ENCODE measurements at regions of chr14 and their contacts with region 1.

Region 1: GRCh38 chr14:21071225-21072030 is 1.3 kb downstream of the ARHGEF40 start:
- H3K4me3 ChIP-seq: peak overlapping the region; percentile 79
- H3K27ac ChIP-seq: peak overlapping the region; percentile 86
- H3K4me1 ChIP-seq: peaks cover 16% of the 10 kb centered on the region
- CTCF ChIP-seq: no peak

Region 2: DNA sequence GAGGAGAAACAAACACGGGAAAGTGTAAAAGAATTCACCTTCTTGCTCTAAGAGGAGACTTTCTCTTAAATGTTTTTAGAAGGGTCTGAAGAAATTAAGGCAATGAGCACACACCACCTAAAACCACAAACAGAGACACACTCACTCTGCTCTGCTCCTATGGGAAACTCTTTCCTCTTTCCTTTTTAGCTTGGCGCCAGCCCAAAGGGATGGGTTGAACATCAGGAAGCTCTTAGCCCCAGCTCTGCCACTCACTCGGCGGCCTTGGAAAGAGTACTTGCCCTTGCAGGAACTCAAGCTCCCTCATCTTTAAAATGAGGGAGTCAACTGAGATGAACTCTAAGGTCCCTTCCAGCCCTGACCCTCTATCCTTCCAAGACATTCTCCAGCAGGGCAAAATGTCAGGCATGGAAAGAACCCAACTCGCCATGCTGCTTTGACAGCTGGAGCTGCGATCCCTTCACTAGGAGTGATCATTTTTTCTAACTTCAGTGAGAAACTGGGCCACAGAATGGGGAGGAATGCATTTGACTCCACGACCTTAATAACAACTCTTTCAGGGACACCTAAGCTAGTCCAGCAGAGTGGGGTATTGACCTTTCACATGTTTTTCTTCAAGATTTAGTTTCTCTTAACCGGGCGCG is 14.8 kb before region 1 on chr14:
- CTCF ChIA-PET with region 1: interaction called, 12 read pairs
- POLR2A ChIA-PET with region 1: interaction called, 11 read pairs
- H3K4me3 ChIP-seq: no peak overlapping the region
- H3K27ac ChIP-seq: no peak overlapping the region
- H3K4me1 ChIP-seq: no peaks in the 10 kb centered on the region
- CTCF ChIP-seq: no peak

Region 3: GRCh38 chr14:21098076-21098891 is 26.9 kb after region 1 on chr14 and contains the start of gene ZNF219:
- CTCF ChIA-PET with region 1: interaction called, 131 read pairs
- POLR2A ChIA-PET with region 1: interaction called, 33 read pairs
- H3K4me3 ChIP-seq: peak within 1 kb of the TSS; percentile 56
- H3K27ac ChIP-seq: peak within 1 kb of the TSS; percentile 72
- H3K4me1 ChIP-seq: peaks cover 23% of the 10 kb centered on the region
- CTCF ChIP-seq: no peak

Region 4: GRCh38 chr14:21197418-21198205 is 126.2 kb after region 1 on chr14:
- CTCF ChIA-PET with region 1: no interaction called
- POLR2A ChIA-PET with region 1: no interaction called
- H3K4me3 ChIP-seq: no peak overlapping the region
- H3K27ac ChIP-seq: no peak overlapping the region
- H3K4me1 ChIP-seq: no peaks in the 10 kb centered on the region
- CTCF ChIP-seq: no peak